IMR-90 (cell line): ENCODE measurements at regions of chr13 and their contacts with region 1.

Region 1: GRCh38 chr13:76903544-76904162 is 17.4 kb upstream of the KCTD12 start:
- DNase-seq: peak; percentile 80
- ATAC-seq: peak; percentile 92
- H3K4me3 ChIP-seq: no peak overlapping the region
- H3K27ac ChIP-seq: no peak overlapping the region
- H3K4me1 ChIP-seq: no peaks in the 10 kb centered on the region
- H3K27me3 ChIP-seq: peaks cover 23% of the 10 kb centered on the region
- CTCF ChIP-seq: peak; percentile 97
- POLR2A ChIP-seq: no peak
- RAD21 ChIP-seq: peak; percentile 98

Region 2: DNA sequence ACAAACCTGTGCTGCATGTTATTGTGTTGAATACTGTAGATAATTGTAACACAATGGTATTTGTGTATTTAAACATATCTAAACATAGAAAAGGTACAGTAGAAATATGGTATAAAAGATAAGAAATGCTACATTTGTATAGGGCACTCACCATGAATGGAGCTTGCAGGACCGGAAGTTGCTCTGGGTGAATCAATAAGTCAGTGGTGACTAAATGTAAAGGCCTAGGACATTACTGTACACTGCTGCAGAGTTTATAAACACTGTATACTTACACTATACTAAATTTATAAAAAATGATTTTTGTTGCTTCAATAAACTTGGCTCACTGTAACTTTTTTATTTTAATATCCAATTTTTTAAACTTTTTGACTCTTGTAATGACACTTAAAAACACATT is 1233.2 kb before region 1 on chr13:
- CTCF ChIA-PET with region 1: no interaction called
- POLR2A ChIA-PET with region 1: no interaction called
- dilution Hi-C with region 1: no loop called
- in situ Hi-C with region 1: loop called (anchors 25 kb)
- intact Hi-C with region 1: loop called (anchors 5 kb)
- DNase-seq: peak; percentile 77
- ATAC-seq: peak; percentile 57
- H3K4me3 ChIP-seq: no peak overlapping the region
- H3K27ac ChIP-seq: peak overlapping the region; percentile 38; the same call in 1 of the 2 replicates
- H3K4me1 ChIP-seq: peaks cover 20% of the 10 kb centered on the region
- H3K27me3 ChIP-seq: no peaks in the 10 kb centered on the region
- CTCF ChIP-seq: no peak
- POLR2A ChIP-seq: no peak
- RAD21 ChIP-seq: no peak

Region 3: DNA sequence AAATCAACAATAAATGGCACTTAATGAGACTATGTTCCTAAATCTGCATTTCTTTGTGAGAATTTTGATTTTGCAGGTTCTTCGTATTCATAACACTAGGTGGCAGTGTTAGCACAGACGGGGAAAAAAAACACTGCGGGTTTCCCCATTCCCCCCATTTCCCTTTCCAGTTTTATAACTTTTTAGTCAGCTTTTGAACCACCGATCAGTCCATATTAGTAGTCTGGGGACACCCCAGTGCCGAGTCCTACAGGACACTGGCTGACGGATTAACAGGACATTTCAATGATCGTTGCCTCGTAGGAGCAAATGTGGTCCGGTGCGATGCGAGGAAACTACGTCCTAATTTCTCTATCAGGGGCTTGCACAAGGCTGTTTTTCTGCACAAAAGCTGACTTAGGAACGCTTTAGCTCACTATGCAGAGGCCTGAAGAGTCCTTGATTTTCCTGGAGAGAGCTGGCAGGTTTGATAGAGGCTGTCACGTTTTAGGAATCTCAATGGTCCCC is 1033.2 kb before region 1 on chr13:
- CTCF ChIA-PET with region 1: interaction called, 6 read pairs
- POLR2A ChIA-PET with region 1: no interaction called
- dilution Hi-C with region 1: no loop called
- in situ Hi-C with region 1: loop called (anchors 5 kb)
- intact Hi-C with region 1: loop called (anchors 1 kb)
- DNase-seq: peak; percentile 20
- ATAC-seq: peak; percentile 5; the same call in 1 of the 2 replicates
- H3K4me3 ChIP-seq: peak overlapping the region; percentile 34; the same call in 1 of the 2 replicates
- H3K27ac ChIP-seq: peak overlapping the region; percentile 4; the same call in 1 of the 2 replicates
- H3K4me1 ChIP-seq: no peaks in the 10 kb centered on the region
- H3K27me3 ChIP-seq: no peaks in the 10 kb centered on the region
- CTCF ChIP-seq: peak; percentile 68
- POLR2A ChIP-seq: peak; percentile 11; the same call in 1 of the 2 replicates
- RAD21 ChIP-seq: peak; percentile 61

Region 4: DNA sequence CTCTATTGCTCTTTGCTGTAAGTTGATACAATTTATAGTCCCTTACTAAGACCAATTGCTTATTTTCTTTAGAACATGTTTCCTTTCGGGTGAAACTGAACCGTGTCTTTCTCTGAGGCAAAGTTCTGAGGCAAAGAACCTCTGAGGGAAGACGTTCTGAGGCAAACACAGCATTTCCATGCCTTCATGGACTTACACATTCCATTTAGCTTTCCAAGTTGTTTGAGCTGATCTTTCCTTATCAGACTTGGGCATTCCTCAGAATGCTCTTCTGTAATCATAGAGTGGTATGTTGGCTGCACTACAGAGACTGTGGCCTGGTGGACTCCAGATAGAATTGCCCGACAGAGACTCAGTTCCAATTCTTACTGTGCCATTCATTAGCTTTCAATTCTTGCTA is 596.5 kb before region 1 on chr13:
- CTCF ChIA-PET with region 1: no interaction called
- POLR2A ChIA-PET with region 1: no interaction called
- dilution Hi-C with region 1: no loop called
- in situ Hi-C with region 1: no loop called
- intact Hi-C with region 1: loop called (anchors 10 kb)
- DNase-seq: peak; percentile 79
- ATAC-seq: peak; percentile 97
- H3K4me3 ChIP-seq: no peak overlapping the region
- H3K27ac ChIP-seq: peak overlapping the region; percentile 12; the same call in 1 of the 2 replicates
- H3K4me1 ChIP-seq: peaks cover 2% of the 10 kb centered on the region; the same call in 1 of the 2 replicates
- H3K27me3 ChIP-seq: no peaks in the 10 kb centered on the region
- CTCF ChIP-seq: 0 out of 2 replicates have a peak, but pooled peaks have one; percentile 10
- POLR2A ChIP-seq: no peak
- RAD21 ChIP-seq: peak; percentile 23; the same call in 1 of the 2 replicates

Region 5: DNA sequence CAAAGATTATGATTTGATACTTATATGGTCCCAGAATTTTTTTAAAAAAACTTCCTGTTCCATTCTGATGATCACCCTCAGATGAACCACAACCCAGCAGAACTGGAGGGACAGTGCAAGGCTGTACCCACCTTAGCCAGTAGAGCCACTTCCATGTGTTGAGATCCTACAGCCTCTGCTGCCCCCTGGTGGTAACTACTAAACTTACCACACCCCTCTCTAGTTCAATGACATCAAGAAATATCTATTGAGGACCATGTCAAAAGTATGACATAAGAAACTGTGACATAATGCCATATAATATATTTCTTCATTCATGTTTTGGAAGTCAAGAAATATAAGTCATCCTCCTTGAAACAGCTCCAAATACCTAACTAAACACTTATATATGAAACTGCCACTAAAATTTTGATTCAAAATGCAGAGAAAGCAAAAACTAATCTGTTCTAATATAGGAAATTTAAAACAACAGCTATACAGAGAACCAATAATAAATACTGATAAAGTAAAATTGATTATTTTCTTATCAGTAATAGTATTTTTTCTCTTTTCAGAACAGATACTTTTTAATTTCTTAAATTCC is 430.0 kb before region 1 on chr13:
- CTCF ChIA-PET with region 1: interaction called, 3 read pairs
- POLR2A ChIA-PET with region 1: no interaction called
- dilution Hi-C with region 1: no loop called
- in situ Hi-C with region 1: loop called (anchors 25 kb)
- intact Hi-C with region 1: loop called (anchors 1 kb)
- DNase-seq: peak; percentile 80
- ATAC-seq: peak; percentile 97
- H3K4me3 ChIP-seq: no peak overlapping the region
- H3K27ac ChIP-seq: no peak overlapping the region
- H3K4me1 ChIP-seq: peaks cover 1% of the 10 kb centered on the region; the same call in 1 of the 2 replicates
- H3K27me3 ChIP-seq: peaks cover 18% of the 10 kb centered on the region
- CTCF ChIP-seq: peak; percentile 87
- POLR2A ChIP-seq: 0 out of 2 replicates have a peak, but pooled peaks have one; percentile 44
- RAD21 ChIP-seq: peak; percentile 95

Region 6: DNA sequence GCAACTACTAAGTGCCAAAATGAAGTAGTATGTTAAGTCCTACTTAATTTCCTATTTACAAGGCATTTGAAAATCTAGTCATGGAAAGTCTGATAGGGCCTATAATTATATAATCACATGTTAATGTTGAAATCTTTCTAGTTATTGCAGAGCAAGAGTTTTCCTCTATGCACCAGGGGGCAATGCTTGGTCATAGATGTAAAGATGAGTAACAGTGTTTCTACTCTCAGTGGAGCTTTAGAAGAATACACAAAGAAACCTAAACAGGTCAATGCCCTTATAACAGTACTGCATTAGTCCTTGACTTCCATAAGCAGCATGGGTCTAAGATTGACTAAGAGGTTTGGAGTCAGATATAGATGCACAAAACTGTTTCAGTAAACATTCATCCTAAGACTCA is 236.1 kb before region 1 on chr13:
- CTCF ChIA-PET with region 1: interaction called, 9 read pairs
- POLR2A ChIA-PET with region 1: no interaction called
- dilution Hi-C with region 1: no loop called
- in situ Hi-C with region 1: loop called (anchors 5 kb)
- intact Hi-C with region 1: loop called (anchors 1 kb)
- DNase-seq: peak; percentile 77
- ATAC-seq: peak; percentile 94
- H3K4me3 ChIP-seq: no peak overlapping the region
- H3K27ac ChIP-seq: no peak overlapping the region
- H3K4me1 ChIP-seq: no peaks in the 10 kb centered on the region
- H3K27me3 ChIP-seq: peaks cover 2% of the 10 kb centered on the region; the same call in 1 of the 2 replicates
- CTCF ChIP-seq: peak; percentile 82
- POLR2A ChIP-seq: no peak
- RAD21 ChIP-seq: peak; percentile 86